GM12878 (cell line): ENCODE measurements at regions of chr1 and their contacts with region 1.

Region 1: DNA sequence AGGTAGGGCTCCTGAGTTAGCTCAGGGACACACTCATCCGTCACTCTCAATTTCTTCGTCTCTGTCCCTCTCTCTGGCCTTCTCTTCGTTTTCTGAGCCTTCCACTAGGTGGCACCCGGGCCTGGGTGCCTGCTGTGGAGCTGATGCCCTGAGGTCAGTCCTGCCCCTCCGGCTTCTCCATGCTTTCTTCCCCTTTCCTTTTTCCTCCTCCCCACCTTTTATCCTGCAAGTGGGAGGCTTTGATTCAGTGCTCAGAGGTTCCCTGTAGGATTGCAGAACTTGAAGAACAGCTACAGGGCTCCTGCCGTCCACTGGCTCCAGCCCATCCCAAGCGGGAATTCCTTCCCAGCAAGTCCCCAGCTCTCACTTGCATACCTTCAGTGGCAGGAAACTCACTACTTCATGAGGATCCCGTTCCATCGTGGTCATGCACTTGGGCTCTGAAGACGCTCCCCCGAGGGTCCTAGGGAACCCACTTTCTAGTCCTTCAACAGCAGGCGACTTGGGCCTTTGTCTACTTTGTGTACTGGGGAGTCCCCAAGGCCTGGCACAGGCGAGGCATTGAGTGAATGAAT is 45.6 kb downstream of the SRRM1 start:
- DNase-seq: no peak
- ATAC-seq: peak; percentile 99
- H3K4me3 ChIP-seq: no peak overlapping the region
- H3K27ac ChIP-seq: no peak overlapping the region
- H3K4me1 ChIP-seq: peaks cover 5% of the 10 kb centered on the region
- H3K27me3 ChIP-seq: no peaks in the 10 kb centered on the region
- CTCF ChIP-seq: peak; percentile 91 to 96 (median 96)
- EP300 ChIP-seq: no peak
- POLR2A ChIP-seq: no peak
- RAD21 ChIP-seq: peak; percentile 99

Region 2: DNA sequence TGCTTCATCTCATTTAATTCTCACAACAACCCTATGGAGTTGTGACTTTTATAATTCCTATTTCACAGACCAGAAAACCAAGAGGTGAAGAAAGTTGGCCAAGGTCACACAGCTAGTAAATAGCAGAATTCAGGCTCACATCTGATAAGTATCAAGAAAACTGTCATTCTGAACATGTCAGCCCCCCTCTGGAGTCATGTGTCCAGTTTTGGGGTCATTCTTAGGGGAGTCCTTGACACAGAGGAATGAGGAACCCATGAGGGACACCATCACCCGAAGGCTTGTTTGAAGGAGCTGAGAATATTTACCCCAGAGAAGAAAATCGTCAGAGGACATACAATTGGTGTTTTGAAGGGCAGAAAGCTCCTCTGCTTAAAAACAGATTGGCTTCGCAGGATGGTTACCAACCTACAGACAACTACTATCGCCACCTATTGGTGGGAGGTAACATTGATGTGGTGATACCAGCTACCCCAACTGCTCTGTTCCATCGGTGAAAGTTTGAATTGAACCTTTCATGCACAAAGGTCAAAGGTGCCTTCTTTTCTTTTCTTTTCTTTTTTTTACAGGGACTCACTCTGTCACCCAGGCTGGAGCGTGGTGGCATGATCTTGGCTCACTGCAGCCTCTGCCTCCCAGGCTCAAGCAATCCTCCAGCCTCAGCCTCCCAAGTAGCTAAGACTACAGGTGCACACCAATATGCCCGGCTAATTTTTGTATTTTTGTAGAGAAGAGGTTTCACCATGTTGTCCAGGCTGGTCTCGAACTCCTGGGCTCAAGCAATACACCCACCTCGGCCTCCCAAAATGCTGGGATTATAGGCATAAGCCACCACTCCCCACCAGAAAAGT is 101.5 kb before region 1 on chr1:
- CTCF ChIA-PET with region 1: no interaction called
- POLR2A ChIA-PET with region 1: no interaction called
- RAD21 ChIA-PET with region 1: no interaction called
- SMC1A ChIA-PET with region 1: no interaction called
- in situ Hi-C with region 1: no loop called
- intact Hi-C with region 1: no loop called
- DNase-seq: no peak
- ATAC-seq: peak; percentile 98
- H3K4me3 ChIP-seq: no peak overlapping the region
- H3K27ac ChIP-seq: no peak overlapping the region
- H3K4me1 ChIP-seq: no peaks in the 10 kb centered on the region
- H3K27me3 ChIP-seq: peaks cover 2 to 5% of the 10 kb centered on the region in 2 experiments; a peak in 2 of 4 replicates
- CTCF ChIP-seq: peak; percentile 78 to 84 (median 78)
- EP300 ChIP-seq: no peak
- POLR2A ChIP-seq: no peak
- RAD21 ChIP-seq: peak; percentile 75

Region 3: GRCh38 chr1:24659993-24660665 is 28.6 kb before region 1 on chr1:
- CTCF ChIA-PET with region 1: interaction called, 12 read pairs
- POLR2A ChIA-PET with region 1: no interaction called
- RAD21 ChIA-PET with region 1: interaction called, 4 read pairs
- SMC1A ChIA-PET with region 1: interaction called, 15 read pairs
- in situ Hi-C with region 1: no loop called
- intact Hi-C with region 1: no loop called
- DNase-seq: no peak
- ATAC-seq: no peak
- H3K4me3 ChIP-seq: no peak overlapping the region
- H3K27ac ChIP-seq: no peak overlapping the region
- H3K4me1 ChIP-seq: no peaks in the 10 kb centered on the region
- H3K27me3 ChIP-seq: no peaks in the 10 kb centered on the region
- CTCF ChIP-seq: no peak
- EP300 ChIP-seq: no peak
- POLR2A ChIP-seq: no peak
- RAD21 ChIP-seq: no peak

Region 4: DNA sequence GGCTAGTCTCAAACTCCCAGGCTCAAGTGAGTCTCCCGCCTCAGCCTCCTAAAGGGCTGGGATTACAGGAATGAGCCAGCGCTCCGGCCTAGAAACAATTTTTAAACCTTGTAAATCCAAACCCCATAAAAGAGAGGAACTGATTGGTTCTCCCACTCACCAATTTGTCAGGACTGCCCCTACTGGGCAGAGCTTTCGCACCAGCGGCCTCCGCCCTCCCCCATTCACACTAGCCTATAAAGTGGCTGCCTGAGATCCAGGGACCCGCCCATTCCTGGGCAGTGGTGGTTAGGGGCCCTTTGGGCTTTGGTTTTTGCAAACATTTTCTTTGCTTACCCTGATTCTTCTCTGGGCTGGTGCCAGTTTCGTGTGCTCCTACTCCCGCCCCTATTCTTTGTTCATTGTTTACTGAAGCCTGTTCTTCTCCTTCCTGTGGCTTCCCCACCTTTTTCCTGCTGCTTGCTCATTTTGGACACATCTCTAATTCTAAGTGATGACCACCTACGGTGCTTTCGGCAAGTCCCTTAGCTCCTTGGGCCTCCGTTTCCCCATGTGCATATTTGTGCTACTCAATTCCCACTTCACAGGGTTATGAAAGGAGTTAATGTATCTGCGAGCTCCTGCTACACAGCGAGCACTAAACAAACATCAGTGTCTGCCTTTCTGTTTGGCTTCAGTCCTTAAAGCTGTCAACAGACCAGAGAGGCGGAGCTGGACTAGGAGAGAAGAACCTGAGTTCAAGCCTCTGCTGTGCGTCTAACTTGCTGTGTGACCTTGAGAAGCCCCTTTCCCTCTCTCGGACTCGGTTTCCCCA is 16.8 kb after region 1 on chr1:
- CTCF ChIA-PET with region 1: interaction called, 5 read pairs
- POLR2A ChIA-PET with region 1: interaction called, 10 read pairs
- RAD21 ChIA-PET with region 1: interaction called, 10 read pairs
- SMC1A ChIA-PET with region 1: interaction called, 26 read pairs
- in situ Hi-C with region 1: no loop called
- intact Hi-C with region 1: no loop called
- DNase-seq: peak; percentile 82
- ATAC-seq: peak; percentile 99
- H3K4me3 ChIP-seq: peak overlapping the region; percentile 8; the same call in 1 of the 2 replicates
- H3K27ac ChIP-seq: no peak overlapping the region
- H3K4me1 ChIP-seq: peaks cover 3% of the 10 kb centered on the region
- H3K27me3 ChIP-seq: no peaks in the 10 kb centered on the region
- CTCF ChIP-seq: no peak
- EP300 ChIP-seq: no peak
- POLR2A ChIP-seq: no peak
- RAD21 ChIP-seq: no peak

Region 5: DNA sequence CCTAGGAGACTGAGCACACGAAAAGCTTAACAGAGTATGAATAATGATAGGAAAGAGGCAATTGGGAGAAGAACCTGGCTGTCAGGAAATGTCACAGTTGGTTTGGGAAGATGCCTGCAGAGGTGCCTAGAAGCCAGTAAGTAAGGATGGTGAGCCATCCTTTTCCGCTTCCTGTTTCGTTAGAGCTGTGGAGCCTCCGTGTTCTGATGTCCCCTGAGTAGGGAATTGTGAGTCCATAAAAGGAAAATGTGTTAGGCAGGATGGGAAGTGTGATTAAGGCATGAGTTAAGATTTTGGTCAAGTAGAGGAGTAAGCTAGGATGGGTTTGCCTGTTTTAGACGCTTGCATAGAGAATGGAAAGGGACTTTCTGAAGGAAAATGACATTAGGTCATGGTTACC is 65.5 kb after region 1 on chr1:
- CTCF ChIA-PET with region 1: interaction called, 18 read pairs
- POLR2A ChIA-PET with region 1: interaction called, 3 read pairs
- RAD21 ChIA-PET with region 1: interaction called, 17 read pairs
- SMC1A ChIA-PET with region 1: interaction called, 19 read pairs
- in situ Hi-C with region 1: no loop called
- intact Hi-C with region 1: loop called (anchors 2 kb)
- DNase-seq: no peak
- ATAC-seq: no peak
- H3K4me3 ChIP-seq: no peak overlapping the region
- H3K27ac ChIP-seq: no peak overlapping the region
- H3K4me1 ChIP-seq: peaks cover 7% of the 10 kb centered on the region; the same call in 1 of the 2 replicates
- H3K27me3 ChIP-seq: no peaks in the 10 kb centered on the region
- CTCF ChIP-seq: no peak
- EP300 ChIP-seq: no peak
- POLR2A ChIP-seq: no peak
- RAD21 ChIP-seq: no peak

Region 6: GRCh38 chr1:24822887-24823286 is 134.2 kb after region 1 on chr1:
- CTCF ChIA-PET with region 1: interaction called, 655 read pairs
- POLR2A ChIA-PET with region 1: interaction called, 7 read pairs
- RAD21 ChIA-PET with region 1: interaction called, 377 read pairs
- SMC1A ChIA-PET with region 1: interaction called, 412 read pairs
- in situ Hi-C with region 1: no loop called
- intact Hi-C with region 1: no loop called
- DNase-seq: no peak
- ATAC-seq: no peak
- H3K4me3 ChIP-seq: no peak overlapping the region
- H3K27ac ChIP-seq: no peak overlapping the region
- H3K4me1 ChIP-seq: no peaks in the 10 kb centered on the region
- H3K27me3 ChIP-seq: no peaks in the 10 kb centered on the region
- CTCF ChIP-seq: no peak
- EP300 ChIP-seq: no peak
- POLR2A ChIP-seq: no peak
- RAD21 ChIP-seq: no peak

Region 7: DNA sequence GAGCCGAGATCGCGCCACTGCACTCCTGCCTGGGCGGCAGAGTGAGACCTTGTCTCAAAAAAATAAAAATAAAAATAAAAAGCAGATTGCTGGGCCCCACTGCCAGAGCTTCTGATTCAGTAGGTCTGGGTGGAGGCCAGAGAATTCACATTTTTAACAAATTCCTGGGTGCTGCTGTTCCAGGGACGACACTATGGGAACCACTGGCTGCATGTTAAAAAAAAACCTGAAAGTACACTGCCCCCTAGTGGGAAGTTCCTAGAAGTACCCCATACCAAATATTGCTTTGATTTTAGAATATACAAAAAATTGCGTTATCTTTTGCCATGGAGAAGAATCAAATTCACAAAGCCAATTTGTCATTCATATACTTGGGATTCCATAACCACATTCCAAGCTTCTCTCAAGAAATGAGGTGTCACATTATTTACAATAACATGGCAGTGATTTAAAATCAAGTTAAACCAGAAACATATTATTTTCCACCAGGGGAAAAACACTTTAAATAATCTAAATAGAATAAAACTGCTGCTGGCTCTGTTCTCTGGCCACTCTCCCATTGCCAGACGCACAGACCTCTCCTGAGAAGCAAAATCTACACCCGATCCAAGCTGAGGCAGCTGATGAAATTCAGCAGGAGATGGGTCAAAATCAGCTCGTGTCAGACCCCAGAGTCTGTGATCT is 516.2 kb after region 1 on chr1:
- CTCF ChIA-PET with region 1: interaction called, 6 read pairs
- POLR2A ChIA-PET with region 1: no interaction called
- RAD21 ChIA-PET with region 1: no interaction called
- SMC1A ChIA-PET with region 1: no interaction called
- in situ Hi-C with region 1: loop called (anchors 10 kb)
- intact Hi-C with region 1: no loop called
- DNase-seq: no peak
- ATAC-seq: peak; percentile 77
- H3K4me3 ChIP-seq: no peak overlapping the region
- H3K27ac ChIP-seq: no peak overlapping the region
- H3K4me1 ChIP-seq: no peaks in the 10 kb centered on the region
- H3K27me3 ChIP-seq: peaks cover 0 to 3% of the 10 kb centered on the region in 2 experiments; a peak in 1 of 4 replicates
- CTCF ChIP-seq: peak; percentile 56 to 65 (median 64)
- EP300 ChIP-seq: no peak
- POLR2A ChIP-seq: no peak
- RAD21 ChIP-seq: peak; percentile 79